GM13976 (cell line): ENCODE measurements at regions of chr11 and their contacts with region 1.

Region 1: DNA sequence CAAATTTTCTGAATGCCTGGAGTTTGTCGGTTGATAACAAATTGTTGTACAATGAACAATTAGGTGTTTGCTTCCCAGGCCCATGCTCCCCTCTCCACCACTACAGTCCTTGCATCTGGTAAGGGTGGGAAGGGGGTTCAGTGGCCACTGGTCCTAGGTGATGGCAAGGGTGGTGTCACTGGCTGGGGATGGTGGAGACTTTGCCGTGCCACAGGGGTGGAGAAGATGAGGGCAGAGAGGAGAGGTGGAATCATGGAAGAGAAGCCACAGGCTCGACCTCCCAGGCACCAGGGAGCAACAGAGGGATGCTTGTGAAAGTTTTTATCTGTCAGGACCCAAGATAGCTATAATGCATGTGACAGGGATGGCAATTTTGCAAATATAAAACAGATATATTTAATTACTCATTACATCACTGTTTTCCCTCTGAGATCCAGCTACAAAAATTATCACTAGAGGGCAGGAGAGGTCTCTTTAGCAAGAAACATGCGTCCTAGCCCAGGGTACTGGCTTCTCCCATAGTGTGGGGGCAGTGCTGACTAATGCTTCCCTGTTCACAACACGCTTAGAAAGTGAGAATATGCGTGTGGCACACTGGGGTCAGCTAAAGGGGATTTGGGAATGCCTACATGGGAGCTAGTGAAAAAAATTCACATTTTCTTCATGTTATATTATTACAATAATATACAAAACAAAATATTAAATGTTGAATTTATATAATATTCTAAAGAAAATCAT is 49.0 kb upstream of the AMPD3 start:
- DNase-seq: peak; percentile 61
- CTCF ChIP-seq: peak; percentile 62

Region 2: DNA sequence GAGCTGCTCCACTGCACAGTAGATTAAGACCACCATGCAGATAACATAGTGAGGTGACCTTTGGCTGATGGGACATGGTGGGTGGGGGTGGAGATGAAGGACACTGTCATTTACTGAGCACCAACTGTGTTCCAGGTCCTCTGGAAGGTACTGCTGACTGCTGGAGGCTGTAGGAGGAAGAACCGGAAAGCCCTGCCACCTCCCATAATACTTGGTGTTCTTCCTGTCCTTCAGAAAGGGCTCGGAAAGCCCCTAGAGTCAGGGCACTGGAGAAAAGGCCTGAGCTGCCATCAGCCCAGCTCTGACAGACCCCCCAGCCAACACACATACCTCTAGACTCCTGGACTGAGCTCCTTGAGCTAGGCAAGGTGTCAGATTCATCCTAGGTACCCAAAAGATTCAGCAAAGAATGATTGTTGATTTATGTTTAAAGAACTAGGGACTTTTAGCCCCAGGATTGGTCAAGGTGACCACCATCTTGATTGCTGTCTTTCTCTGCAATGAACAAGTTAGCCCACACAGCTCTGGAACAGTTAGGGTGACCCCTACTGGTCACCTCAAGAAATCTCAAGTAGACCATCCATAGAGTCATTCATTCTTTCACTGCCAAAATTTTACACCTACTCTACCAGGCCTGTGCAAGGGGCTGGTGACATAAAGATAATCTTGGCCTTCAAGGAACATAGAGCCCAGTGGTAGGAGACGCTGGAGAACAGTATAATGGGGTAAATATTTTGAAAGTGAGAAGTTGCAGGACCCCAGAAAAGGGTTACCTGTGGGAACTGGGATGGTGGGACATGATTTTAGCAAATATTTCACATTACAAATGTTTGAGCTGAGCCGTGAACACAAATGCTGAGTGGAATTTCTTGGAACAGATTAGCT is 248.1 kb after region 1 on chr11:
- in situ Hi-C with region 1: loop called (anchors 10 kb)
- DNase-seq: peak; percentile 75
- CTCF ChIP-seq: peak; percentile 51

Region 3: DNA sequence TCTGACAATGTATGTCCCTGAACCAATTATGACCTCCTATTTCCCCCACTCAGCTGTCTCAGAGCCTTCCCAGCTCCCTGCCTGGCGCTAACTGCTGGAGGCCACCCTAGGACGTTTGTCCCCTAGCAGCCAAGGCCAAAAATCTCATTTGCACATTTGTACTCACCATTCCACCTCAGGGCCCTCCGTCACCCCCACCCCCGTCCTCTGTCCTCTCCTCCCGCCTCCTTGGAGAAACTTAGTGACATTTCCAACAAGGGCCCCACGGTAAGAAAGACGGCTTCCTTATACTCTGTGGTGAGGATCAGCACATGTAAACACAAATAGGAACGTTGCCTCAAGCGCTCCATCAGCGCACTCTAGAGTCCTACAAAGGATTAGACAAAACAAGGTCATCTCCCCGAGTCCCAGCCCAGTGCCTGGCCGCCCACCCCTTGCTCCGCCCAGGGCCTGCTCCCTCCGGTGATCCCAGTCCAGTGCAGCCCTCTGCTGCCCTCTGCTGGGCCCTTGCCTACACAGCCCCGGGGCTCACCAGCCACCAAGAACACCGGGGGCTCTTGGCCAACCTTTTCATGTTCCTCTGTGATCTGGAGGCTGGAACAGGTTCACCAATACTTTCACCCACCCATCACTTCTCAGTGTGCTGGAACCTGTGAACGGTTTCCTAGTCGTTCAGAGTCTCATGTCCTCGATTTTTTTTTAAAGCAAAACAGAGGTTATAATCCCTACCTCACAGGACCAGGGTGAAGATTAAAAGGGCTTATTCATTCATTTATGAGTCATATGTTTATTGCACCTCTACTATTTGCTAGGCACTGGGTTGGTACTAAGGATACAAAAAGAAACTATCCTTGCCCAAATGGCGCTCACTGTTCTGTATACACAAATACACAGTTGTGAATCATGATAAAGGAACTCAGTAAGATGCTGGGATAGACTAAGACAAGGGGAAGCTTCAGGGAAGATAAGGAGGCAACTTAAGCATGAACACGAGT is 329.8 kb after region 1 on chr11:
- in situ Hi-C with region 1: loop called (anchors 5 kb)
- DNase-seq: peak; percentile 91
- CTCF ChIP-seq: peak; percentile 97